ENCODE measurements at regions of chr5 and their contacts with region 1.

Region 1: GRCh38 chr5:56375011-56375410 is 141.9 kb upstream of the ANKRD55 start:
- DNase-seq: no peak
- ATAC-seq: no peak
- H3K4me3 ChIP-seq: no peak overlapping the region
- H3K4me3 Mint-ChIP-seq: no peak overlapping the region
- H3K27ac ChIP-seq: no peak overlapping the region
- H3K27ac Mint-ChIP-seq: no peak overlapping the region
- H3K4me1 ChIP-seq: no peaks in the 10 kb centered on the region
- H3K4me1 Mint-ChIP-seq: no peaks in the 10 kb centered on the region
- H3K27me3 ChIP-seq: no peaks in the 10 kb centered on the region
- H3K27me3 Mint-ChIP-seq: no peaks in the 10 kb centered on the region
- CTCF ChIP-seq: no peak

Region 2: DNA sequence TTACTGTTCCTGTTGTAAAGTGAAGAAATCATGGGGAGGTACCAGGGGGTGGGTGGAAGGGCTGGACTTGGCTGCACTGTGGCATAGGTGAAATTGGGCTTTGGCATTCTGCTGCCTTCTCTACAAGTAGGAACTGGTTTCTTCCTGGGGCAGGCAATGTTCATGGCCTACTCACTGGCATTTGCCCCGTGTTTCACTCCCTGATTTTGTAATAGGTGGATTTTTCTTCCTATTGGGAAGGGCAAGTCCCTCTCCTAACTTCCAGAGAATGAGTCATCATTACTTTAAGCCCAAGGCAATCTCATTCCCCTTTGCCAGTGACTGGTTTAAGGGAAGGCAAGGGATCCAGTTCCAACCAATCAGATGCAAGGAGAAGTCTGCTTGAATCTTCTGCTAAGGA is 74.0 kb before region 1 on chr5:
- CTCF ChIA-PET with region 1: no interaction called
- POLR2A ChIA-PET with region 1: no interaction called
- intact Hi-C with region 1: no loop called
- DNase-seq: no peak
- ATAC-seq: no peak
- H3K4me3 ChIP-seq: no peak overlapping the region
- H3K4me3 Mint-ChIP-seq: no peak overlapping the region
- H3K27ac ChIP-seq: no peak overlapping the region
- H3K27ac Mint-ChIP-seq: no peak overlapping the region
- H3K4me1 ChIP-seq: no peaks in the 10 kb centered on the region
- H3K4me1 Mint-ChIP-seq: no peaks in the 10 kb centered on the region
- H3K27me3 ChIP-seq: no peaks in the 10 kb centered on the region
- H3K27me3 Mint-ChIP-seq: no peaks in the 10 kb centered on the region
- CTCF ChIP-seq: no peak

Region 3: DNA sequence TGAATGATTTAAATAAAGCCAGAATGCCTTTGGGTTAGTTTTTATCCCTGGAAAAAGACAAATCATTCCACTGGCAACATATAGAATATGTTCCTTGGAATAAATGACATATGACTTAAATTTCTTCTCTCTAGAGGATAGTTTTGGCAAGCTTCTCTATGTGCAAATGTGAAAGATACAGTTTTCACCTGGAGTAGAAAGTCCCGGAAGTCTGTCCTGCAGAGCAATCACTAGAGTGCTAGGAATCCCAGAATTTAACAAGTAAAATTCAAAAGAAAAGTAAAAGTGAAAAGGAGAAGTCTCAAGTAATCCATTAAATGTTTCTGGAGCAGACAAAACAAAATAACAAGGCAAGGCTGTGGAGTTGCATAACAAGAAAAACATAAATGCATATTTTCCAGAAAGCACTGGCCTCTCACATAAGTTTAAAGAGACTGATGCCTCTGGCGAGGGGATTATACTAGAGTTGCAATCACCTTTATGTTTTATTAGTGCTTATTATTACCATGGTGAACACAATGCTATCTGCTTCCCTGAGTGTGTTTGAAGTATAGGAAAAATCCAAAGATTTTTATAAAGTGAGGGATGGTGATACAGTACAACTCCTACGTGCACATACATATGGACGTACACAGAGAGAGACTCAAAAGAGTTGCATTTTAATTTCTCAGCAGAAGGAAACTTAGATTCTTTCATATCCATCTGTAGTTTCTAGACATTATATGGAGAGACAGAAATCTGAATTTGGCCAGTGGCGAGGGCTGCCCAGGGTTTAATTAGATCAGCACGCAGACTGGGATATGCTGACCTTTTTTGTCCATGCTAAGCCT is 46.5 kb after region 1 on chr5:
- CTCF ChIA-PET with region 1: no interaction called
- POLR2A ChIA-PET with region 1: no interaction called
- intact Hi-C with region 1: loop called in 1 of 2 experiments (anchors 2 kb)
- DNase-seq: no peak
- ATAC-seq: no peak
- H3K4me3 ChIP-seq: no peak overlapping the region
- H3K4me3 Mint-ChIP-seq: no peak overlapping the region
- H3K27ac ChIP-seq: no peak overlapping the region
- H3K27ac Mint-ChIP-seq: no peak overlapping the region
- H3K4me1 ChIP-seq: no peaks in the 10 kb centered on the region
- H3K4me1 Mint-ChIP-seq: no peaks in the 10 kb centered on the region
- H3K27me3 ChIP-seq: no peaks in the 10 kb centered on the region
- H3K27me3 Mint-ChIP-seq: no peaks in the 10 kb centered on the region
- CTCF ChIP-seq: no peak